Right ventricle myocardium superior (tissue), 1 donor: ENCODE measurements at regions of chr5 and their contacts with region 1.

Region 1: DNA sequence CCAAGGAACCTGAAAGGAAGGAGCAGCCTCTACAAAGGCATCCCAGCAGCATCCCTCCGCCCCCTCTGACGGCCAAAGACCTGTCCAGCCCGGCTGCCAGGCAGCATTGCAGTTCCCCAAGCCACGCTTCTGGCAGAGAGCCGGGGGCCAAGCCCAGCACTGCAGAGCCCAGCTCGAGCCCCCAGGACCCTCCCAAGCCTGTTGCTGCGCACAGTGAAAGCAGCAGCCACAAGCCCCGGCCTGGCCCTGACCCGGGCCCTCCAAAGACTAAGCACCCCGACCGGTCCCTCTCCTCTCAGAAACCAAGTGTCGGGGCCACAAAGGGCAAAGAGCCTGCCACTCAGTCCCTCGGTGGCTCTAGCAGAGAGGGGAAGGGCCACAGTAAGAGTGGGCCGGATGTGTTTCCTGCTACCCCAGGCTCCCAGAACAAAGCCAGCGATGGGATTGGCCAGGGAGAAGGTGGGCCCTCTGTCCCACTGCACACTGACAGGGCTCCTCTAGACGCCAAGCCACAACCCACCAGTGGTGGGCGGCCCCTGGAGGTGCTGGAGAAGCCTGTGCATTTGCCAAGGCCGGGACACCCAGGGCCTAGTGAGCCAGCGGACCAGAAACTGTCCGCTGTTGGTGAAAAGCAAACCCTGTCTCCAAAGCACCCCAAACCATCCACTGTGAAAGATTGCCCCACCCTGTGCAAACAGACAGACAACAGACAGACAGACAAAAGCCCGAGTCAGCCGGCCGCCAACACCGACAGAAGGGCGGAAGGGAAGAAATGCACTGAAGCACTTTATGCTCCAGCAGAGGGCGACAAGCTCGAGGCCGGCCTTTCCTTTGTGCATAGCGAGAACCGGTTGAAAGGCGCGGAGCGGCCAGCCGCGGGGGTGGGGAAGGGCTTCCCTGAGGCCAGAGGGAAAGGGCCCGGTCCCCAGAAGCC is 30.8 kb downstream of the CD180 start:
- DNase-seq: peak; percentile 93
- ATAC-seq: peak; percentile 89

Region 2: DNA sequence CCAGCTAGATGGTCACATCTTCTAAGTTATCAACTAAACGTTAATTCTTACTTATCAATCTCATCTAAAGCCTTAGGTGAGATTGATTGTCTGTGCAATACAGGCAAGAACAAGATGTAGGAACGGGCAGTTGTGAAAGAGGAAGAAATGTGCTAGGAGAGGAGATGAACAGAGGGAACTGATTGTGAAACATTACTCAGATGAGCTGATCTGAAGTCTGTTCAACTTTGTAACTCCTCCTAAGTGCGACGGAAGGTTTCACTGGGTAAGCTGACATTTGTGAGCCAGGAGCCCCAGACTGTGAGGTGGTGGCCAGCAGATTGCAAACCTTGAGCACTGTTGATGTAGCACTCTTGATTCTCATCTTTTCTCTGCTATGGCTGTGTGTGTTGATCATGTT is 173.2 kb before region 1 on chr5:
- intact Hi-C with region 1: no loop called
- DNase-seq: no peak
- ATAC-seq: peak; percentile 15

Region 3: DNA sequence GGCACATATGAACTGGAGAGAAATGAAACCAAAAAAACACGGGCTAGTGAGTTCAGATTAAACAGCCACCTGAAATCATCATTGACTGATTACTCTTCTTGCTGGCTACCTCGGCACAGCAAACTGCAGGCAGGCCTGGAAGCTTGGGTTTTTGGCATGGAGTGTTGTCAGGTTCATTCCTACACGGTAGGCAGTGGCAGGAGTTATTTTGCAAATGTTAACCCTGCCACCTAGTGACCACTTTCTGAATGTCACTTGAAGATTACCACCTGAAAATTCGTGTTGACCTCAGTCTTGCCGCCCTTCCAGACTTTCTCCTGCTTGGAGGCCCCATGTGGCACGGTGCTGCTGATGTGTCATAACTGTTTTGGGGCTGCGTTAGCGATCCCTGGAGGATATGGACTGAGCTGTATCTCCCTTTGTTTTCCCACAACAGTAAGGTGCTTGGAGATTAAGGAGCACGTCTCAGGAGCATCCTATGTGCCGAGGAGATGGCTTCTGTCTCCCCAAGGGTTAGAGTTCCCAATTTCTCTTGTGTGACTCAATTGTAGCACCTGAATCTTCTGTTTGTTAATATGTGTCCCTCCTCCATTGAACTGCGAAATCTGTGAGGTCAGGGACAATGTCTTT is 43.5 kb after region 1 on chr5:
- intact Hi-C with region 1: loop called (anchors 5 kb)
- DNase-seq: no peak
- ATAC-seq: peak; percentile 83

Region 4: GRCh38 chr5:67383451-67383850 is 217.7 kb after region 1 on chr5:
- intact Hi-C with region 1: no loop called
- DNase-seq: no peak
- ATAC-seq: no peak

Region 5: DNA sequence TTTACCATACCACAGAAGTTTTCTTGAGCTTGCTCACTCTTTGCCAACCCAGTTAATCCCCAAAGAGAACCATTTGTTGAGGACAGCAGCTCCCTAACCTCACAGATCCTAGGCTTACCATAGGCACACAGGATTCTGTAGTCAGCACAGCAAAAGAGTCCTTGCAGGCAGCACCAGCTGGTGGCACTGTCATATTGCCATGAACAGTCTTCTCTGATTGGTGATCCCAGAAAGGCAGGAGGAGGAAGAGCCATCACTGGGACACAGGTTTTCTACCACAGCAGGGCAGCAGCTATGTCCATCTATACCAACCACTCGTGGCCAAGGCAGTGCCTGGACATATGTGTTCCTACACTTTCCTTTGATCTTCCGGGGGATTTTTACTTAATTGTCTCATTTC is 327.9 kb after region 1 on chr5:
- intact Hi-C with region 1: no loop called
- DNase-seq: peak; percentile 48
- ATAC-seq: peak; percentile 93

Region 6: DNA sequence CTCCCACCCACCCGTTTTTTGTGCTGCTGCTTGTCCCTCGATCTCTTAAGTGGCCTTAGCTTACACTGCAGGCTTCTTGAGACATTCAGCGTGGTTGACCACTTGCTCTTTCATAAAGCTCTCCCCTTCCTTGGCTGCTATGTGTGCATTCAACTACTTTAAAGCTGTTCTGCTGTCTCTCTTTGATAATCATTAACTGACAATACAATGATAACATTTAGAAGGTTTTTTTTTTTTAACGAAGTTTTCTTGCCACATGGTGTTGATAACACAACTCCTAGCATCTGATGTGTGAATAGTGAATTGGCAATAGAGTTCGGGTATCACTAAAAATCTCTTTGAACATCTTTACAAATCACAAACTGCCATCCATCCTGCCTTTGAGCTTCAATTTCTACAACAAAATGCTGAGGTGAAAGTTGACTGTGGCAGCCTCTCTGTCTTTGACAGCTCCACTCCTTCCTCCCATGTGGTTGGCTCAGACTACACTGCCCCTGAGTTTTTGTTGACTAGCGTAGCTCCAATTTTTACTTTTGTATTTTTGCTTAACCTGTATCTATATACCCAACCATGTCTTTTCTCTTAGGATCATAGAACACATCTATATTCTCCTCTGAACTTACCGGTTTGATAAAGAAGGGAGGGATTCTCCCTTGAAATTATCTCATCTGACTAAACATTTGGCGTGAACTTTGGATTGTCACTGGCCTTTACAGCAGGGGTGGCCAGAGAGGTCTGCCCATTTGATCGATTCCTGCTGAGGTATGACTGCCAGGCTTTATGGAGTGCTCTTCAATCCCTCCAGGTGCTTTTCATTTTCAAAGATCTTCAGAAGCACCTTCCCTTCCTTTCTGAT is 440.2 kb after region 1 on chr5:
- intact Hi-C with region 1: no loop called
- DNase-seq: no peak
- ATAC-seq: no peak